ENCODE measurements at regions of chrX and their contacts with region 1.

Region 1: GRCh38 chrX:133852837-133853356 is 132.5 kb downstream of the GPC3 start:
- H3K4me3 ChIP-seq: no peak overlapping the region
- H3K27ac ChIP-seq: no peak overlapping the region
- H3K4me1 ChIP-seq: peaks cover 8% of the 10 kb centered on the region
- CTCF ChIP-seq: no peak

Region 2: DNA sequence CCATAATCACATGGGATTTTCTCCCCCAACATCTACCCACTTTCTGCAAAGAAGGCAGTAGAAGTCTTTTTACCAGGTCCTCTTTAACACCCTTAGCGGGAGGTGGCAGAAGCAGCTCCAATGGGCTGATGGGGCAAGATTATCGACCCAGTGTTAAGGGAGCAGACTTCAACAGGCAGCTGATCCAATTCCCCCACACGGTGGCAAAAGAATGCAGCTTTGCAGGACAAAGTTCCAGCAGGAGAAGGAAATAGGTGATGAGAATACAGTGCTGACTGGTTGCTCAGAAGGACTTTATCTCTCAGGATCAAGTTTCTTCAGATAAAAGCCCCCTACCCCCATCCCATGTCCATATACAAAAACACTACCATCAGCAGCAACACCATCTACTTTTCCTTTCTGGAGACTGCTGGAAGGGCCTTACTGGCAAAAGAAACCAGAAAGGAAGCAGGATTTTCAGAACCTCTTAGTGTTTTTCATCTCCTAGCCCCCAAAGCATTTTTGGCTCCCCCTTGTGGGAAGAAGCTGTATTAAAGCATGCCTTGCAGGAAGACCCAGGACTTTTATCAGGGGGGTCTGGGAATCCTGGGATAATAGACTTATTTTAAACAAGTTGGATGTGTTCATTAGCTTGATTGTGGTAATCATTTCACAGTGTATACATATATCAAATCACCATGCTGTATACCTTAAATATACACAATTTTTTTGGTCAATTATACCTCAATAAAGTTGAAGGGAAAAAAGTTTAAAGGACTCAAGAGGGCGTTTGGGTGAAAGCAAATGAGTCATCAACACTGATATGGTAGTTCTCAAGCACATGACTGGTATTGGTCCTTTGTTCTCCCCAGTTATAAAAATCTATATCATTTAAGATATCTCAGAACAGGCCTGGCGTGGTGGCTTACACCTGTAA is 13.9 kb before region 1 on chrX:
- CTCF ChIA-PET with region 1: interaction called, 26 read pairs
- POLR2A ChIA-PET with region 1: no interaction called
- H3K4me3 ChIP-seq: no peak overlapping the region
- H3K27ac ChIP-seq: no peak overlapping the region
- H3K4me1 ChIP-seq: no peaks in the 10 kb centered on the region
- CTCF ChIP-seq: no peak

Region 3: GRCh38 chrX:133921764-133922389 is 69.0 kb after region 1 on chrX:
- CTCF ChIA-PET with region 1: interaction called, 22 read pairs
- POLR2A ChIA-PET with region 1: no interaction called
- H3K4me3 ChIP-seq: no peak overlapping the region
- H3K27ac ChIP-seq: no peak overlapping the region; the same call in 1 of the 2 replicates
- H3K4me1 ChIP-seq: no peaks in the 10 kb centered on the region; the same call in none of the 2 replicates
- CTCF ChIP-seq: peak; percentile 87

Region 4: GRCh38 chrX:134095366-134095765 is 242.5 kb after region 1 on chrX:
- CTCF ChIA-PET with region 1: no interaction called
- POLR2A ChIA-PET with region 1: no interaction called
- H3K4me3 ChIP-seq: no peak overlapping the region
- H3K27ac ChIP-seq: no peak overlapping the region
- H3K4me1 ChIP-seq: no peaks in the 10 kb centered on the region
- CTCF ChIP-seq: no peak

Measured in HEK293 (cell line).